BJ (cell line): ENCODE measurements at regions of chr1 and their contacts with region 1.

Region 1: DNA sequence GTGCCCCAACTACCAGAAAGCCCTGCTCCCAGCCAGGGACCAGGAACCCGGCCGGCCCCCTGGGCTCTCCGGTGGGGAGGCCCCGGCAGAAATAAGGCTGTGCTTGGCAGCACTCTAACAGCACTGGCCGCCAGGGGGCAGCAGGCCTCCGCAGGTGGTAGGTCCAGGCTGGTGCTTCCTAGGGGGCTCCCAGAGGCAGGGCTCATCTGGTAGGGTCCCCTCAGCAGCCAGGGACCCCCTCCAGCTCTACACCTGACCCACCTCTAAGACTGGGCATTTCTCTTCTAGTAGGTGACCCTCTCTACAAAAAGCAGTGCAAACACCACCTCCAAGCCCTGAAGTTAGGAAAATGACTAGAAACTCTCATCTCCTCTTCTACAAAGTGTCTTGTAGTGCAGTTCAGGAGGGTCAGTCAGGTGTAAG is 85.6 kb downstream of the STUM start:
- DNase-seq: no peak
- H3K4me3 ChIP-seq: no peak overlapping the region
- H3K27me3 ChIP-seq: peaks cover 1% of the 10 kb centered on the region; the same call in 1 of the 2 replicates
- CTCF ChIP-seq: peak; percentile 95

Region 2: GRCh38 chr1:226653311-226653921 is 19.2 kb after region 1 on chr1:
- CTCF ChIA-PET with region 1: interaction called, 14 read pairs
- POLR2A ChIA-PET with region 1: no interaction called
- DNase-seq: no peak
- H3K4me3 ChIP-seq: no peak overlapping the region
- H3K27me3 ChIP-seq: no peaks in the 10 kb centered on the region
- CTCF ChIP-seq: no peak